Prostate gland (tissue), 2 donors: ENCODE measurements at regions of chr1 and their contacts with region 1.

Region 1: GRCh38 chr1:91742848-91743292 is 143.1 kb downstream of the TGFBR3 start:
- DNase-seq: peak; percentile 55
- H3K4me3 ChIP-seq: no peak overlapping the region
- H3K27ac ChIP-seq: peak overlapping the region; percentile 64 to 72
- H3K4me1 ChIP-seq: peaks cover 11% of the 10 kb centered on the region
- H3K27me3 ChIP-seq: no peaks in the 10 kb centered on the region
- CTCF ChIP-seq: peak in 1 of 4 experiments; percentile 12
- POLR2A ChIP-seq: no peak

Region 2: DNA sequence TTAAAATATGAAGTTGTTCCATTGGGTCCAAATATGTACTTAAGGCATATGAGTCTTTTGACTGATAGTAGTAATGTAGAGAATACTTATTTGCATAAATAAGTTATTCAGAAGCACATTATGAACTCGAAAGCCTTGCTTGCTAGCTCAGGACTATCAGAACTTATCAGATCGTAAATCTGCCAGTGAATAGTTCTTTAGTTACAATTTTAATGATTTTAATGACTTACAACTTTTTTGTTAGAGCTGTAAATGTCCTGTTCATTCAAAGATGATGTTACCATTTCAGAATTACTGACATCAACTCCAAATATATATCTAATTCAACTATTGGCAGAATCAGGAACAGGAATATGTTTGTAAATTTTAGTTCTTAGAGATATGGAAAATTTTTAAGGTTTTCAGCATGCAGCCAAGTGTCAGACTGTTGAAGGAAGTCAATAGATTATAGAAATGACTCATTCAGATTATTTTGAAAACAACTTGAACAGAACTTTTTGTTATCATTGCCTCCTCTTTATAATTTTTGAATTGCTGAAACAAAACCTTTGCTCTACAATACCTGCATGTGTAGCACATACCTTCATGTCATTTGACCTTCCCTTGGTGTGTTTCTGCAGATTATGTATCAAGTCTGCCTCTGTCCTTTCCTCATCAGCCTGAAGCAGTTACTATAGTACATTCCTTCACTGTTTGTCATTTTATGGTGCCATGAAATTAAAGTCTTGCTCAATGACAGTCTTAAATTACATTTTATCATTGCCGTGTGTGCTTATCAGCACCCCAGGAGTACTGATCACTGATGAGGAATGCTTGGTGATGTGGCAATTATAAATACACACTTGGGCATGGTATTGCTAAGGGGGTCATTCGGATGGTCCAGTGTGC is 1877.1 kb before region 1 on chr1:
- intact Hi-C with region 1: no loop called
- DNase-seq: no peak
- H3K4me3 ChIP-seq: no peak overlapping the region
- H3K27ac ChIP-seq: no peak overlapping the region
- H3K4me1 ChIP-seq: no peaks in the 10 kb centered on the region
- H3K27me3 ChIP-seq: no peaks in the 10 kb centered on the region
- CTCF ChIP-seq: no peak
- POLR2A ChIP-seq: no peak

Region 3: DNA sequence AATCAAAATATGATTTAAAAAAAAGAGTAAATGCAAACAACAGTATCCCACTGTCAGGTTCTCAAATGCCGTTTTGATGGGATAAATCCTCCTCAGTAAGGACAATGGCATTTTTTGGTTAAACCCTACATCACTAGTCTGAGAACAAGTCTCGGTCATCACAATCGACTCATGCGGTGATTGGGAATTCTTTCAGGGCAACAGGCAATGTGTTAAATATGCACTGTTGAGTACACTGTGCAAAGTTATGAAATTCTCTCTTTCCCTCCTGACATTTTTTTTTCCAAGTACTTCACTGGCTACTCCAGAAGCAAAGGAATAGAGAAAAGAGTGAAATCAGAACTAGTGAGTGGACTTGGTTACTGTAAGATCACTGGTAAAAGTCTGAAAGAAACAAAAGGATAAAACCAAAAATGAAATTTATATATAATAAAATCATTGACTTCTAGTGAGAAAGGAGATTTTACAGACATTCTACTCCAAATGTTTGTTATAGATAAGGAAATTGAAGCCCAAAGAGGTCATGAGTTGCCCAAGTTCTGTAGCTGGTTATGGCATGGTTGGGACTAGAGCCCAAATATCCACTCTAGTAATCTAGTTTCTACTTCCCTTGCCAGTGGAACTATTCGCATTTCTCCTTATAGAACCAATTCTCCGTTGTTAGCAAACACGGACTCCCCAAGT is 31.8 kb after region 1 on chr1:
- intact Hi-C with region 1: loop called (anchors 5 kb)
- DNase-seq: no peak
- H3K4me3 ChIP-seq: no peak overlapping the region
- H3K27ac ChIP-seq: no peak overlapping the region
- H3K4me1 ChIP-seq: no peaks in the 10 kb centered on the region
- H3K27me3 ChIP-seq: no peaks in the 10 kb centered on the region
- CTCF ChIP-seq: no peak
- POLR2A ChIP-seq: no peak